ENCODE measurements at regions of chr4 and their contacts with region 1.

Region 1: DNA sequence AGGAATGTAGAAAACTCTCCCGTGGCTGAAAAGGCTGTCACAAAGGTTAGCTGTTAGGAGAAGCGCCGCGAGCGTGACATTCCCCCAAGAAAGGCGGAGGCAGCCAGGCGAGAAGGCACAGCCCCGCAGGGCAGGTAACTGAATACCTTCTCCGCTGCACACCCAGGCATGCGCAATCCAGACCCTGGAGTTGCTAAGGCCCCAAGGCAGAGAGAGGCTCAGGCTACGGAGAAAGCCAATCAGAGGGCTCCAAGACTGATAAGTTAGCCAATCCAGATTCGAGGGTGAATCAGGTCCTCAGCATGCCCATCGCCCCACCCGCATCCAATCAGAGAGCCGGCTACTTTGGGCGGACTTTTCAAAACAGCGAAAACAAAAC is 485 bp upstream of the CCNG2 start:
- DNase-seq: peak in 6 of 9 donors; percentile 99 to 100 (median 99)
- ATAC-seq: peak; percentile 96
- H3K4me3 ChIP-seq: peak overlapping the region; percentile 99
- H3K4me3 Mint-ChIP-seq: peak overlapping the region; percentile 92 to 99 (median 98)
- H3K27ac ChIP-seq: peak overlapping the region; percentile 85
- H3K27ac Mint-ChIP-seq: peak overlapping the region; percentile 88 to 99 (median 99)
- H3K4me1 ChIP-seq: peaks cover 10 to 17% of the 10 kb centered on the region in 2 donors
- H3K4me1 Mint-ChIP-seq: peaks cover 13 to 52% (median 43%) of the 10 kb centered on the region in 7 donors
- H3K27me3 ChIP-seq: no peaks in the 10 kb centered on the region
- H3K27me3 Mint-ChIP-seq: peaks cover 0 to 6% (median 0%) of the 10 kb centered on the region in 5 donors

Region 2: DNA sequence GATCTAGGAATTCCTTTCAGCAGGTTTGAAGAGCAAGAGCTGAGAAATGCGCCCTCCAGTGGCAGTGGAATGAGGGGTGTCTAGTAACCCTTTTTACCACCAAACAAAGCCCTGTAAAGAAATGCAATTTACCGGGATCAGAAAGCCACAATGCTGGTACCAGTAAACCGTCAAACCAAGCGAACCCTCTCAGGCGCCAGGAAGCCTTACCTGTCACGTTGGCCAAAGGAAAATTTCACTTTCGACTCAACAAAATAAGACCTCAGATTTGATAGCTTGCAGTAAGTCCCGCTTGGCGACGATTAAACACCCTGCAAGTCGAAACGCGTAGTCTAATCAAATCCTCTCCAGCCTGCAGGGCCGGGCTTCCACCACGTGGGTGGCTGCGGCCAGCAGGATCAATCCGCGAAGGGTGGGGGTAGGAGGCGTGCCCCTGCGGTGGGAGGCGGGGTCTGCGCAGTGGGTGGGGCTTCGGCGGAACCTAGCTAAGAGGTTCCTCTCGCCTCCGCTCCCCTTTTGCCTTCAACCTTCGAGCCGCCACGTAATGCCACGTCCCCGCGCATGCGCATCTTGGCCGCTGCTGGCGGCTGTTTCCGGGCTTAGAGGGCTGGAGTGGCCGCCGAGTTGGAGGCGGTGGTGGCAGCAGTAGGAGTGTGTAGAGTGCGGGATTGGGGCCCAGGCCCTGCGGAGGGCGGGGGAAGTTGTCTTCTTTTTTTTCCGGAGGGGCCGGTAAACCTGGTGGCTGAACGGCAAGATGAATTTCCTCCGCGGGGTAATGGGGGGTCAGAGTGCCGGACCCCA is 1432.3 kb before region 1 on chr4 and contains the start of gene USO1:
- CTCF ChIA-PET with region 1: no interaction called
- POLR2A ChIA-PET with region 1: no interaction called
- intact Hi-C with region 1: loop called (anchors 1 to 5 kb)
- DNase-seq: peak; percentile 98 to 100 (median 99)
- ATAC-seq: peak; percentile 98
- H3K4me3 ChIP-seq: peak within 1 kb of the TSS; percentile 87
- H3K4me3 Mint-ChIP-seq: peak within 1 kb of the TSS; percentile 93 to 100 (median 100)
- H3K27ac ChIP-seq: peak within 1 kb of the TSS; percentile 91
- H3K27ac Mint-ChIP-seq: peak within 1 kb of the TSS; percentile 97 to 100 (median 99)
- H3K4me1 ChIP-seq: peaks cover 25 to 30% of the 10 kb centered on the region in 2 donors
- H3K4me1 Mint-ChIP-seq: peaks cover 32 to 60% (median 59%) of the 10 kb centered on the region in 7 donors
- H3K27me3 ChIP-seq: no peaks in the 10 kb centered on the region
- H3K27me3 Mint-ChIP-seq: peaks cover 0 to 4% (median 0%) of the 10 kb centered on the region in 5 donors
- total RNA-seq, gene USO1: 17.8 to 54.8 (median 35.0) TPM

Region 3: DNA sequence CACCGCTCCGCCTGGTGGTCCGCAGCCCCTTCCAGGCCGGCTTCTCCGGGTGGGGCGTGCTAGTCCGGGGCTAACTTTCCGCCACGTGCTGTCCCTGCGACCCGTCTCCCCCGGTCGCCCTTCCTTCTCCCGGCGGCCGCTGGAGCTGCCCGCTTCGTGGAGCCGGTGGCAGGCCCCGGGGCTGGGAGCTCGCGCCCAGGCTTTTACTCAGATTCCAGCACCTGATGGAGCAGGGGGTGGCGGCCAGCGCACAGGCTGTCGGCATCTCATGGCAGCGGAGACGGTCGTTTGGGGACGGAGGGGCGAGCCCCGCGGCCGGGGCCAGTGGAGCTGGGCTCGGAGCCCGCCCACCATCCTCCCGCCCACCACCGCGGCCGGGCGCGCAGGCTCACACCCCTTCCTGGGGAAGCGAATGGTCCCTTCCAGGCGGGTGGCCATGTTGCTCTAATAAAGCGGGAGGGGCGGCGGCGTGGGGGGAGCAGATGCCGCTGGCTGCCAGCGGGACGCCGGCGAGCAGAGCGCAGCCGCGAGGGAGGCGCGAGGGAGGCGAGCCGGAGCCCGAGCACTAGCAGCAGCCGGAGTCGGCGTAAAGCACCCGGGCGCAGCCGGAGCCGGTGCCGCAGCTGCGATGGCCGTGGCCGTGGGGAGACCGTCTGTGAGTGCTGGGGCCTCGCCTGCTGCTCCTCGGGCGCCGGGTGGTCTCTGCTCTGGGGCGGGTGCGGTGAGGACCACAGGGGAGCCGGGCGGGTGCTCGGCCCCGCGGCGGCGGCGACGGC is 207.1 kb before region 1 on chr4 and contains the start of gene SEPTIN11:
- CTCF ChIA-PET with region 1: no interaction called
- POLR2A ChIA-PET with region 1: no interaction called
- intact Hi-C with region 1: loop called (anchors 2 kb)
- DNase-seq: peak; percentile 56 to 78 (median 72)
- ATAC-seq: peak; percentile 87
- H3K4me3 ChIP-seq: peak within 1 kb of the TSS; percentile 80
- H3K4me3 Mint-ChIP-seq: peak within 1 kb of the TSS; percentile 70 to 97 (median 88)
- H3K27ac ChIP-seq: peak within 1 kb of the TSS; percentile 58
- H3K27ac Mint-ChIP-seq: peak within 1 kb of the TSS in 7 of 9 donors; percentile 28 to 82 (median 71)
- H3K4me1 ChIP-seq: peaks cover 0 to 10% of the 10 kb centered on the region in 2 donors
- H3K4me1 Mint-ChIP-seq: peaks cover 8 to 23% (median 16%) of the 10 kb centered on the region in 7 donors
- H3K27me3 ChIP-seq: peaks cover 0 to 6% of the 10 kb centered on the region in 2 donors
- H3K27me3 Mint-ChIP-seq: peaks cover 0 to 71% (median 4%) of the 10 kb centered on the region in 5 donors
- total RNA-seq, gene SEPTIN11: 12.2 to 29.3 (median 20.3) TPM

Region 4: GRCh38 chr4:77095101-77095821 is 61.3 kb before region 1 on chr4:
- CTCF ChIA-PET with region 1: interaction called, 3 read pairs
- POLR2A ChIA-PET with region 1: no interaction called
- intact Hi-C with region 1: loop called (anchors 1 kb)
- DNase-seq: peak; percentile 46 to 67 (median 59)
- ATAC-seq: peak; percentile 98
- H3K4me3 ChIP-seq: no peak overlapping the region
- H3K4me3 Mint-ChIP-seq: no peak overlapping the region
- H3K27ac ChIP-seq: no peak overlapping the region
- H3K27ac Mint-ChIP-seq: no peak overlapping the region
- H3K4me1 ChIP-seq: peaks cover 0 to 2% of the 10 kb centered on the region in 2 donors
- H3K4me1 Mint-ChIP-seq: peaks cover 8 to 20% (median 16%) of the 10 kb centered on the region in 7 donors
- H3K27me3 ChIP-seq: no peaks in the 10 kb centered on the region
- H3K27me3 Mint-ChIP-seq: no peaks in the 10 kb centered on the region

Region 5: DNA sequence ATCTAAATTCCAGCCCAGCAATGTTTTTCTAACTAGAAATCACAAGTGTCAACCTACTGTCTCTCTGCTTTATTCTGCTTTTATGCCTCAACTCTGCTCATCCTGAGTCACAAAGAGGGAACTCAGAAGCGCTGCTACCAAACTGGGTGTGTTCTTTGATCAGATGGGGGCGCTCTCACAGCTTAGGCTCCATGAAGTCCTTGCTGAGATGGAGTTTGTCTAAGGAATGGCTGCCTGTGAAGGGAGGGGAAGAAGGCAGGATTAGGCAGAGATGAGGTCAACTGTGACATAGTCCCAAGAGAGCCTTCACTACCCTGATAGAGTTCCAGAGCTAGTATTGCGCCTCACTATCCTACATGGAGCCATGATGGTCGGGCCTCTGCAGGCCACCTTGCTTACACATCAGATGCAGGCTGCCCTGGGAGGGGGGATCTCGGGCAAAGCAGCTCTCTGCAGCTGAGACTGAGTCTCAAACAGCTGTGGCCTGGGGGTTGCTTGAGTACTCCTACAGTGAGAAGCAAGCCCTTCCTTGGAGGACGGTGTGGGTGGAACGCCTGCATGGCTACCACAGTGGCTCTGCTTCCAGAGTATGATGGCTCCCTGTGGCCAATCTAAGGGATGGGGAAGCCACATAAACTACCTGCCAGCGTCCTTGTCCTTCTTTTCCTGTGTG is 220.4 kb after region 1 on chr4:
- CTCF ChIA-PET with region 1: no interaction called
- POLR2A ChIA-PET with region 1: no interaction called
- intact Hi-C with region 1: no loop called
- DNase-seq: no peak
- ATAC-seq: peak; percentile 36
- H3K4me3 ChIP-seq: no peak overlapping the region
- H3K4me3 Mint-ChIP-seq: no peak overlapping the region
- H3K27ac ChIP-seq: no peak overlapping the region
- H3K27ac Mint-ChIP-seq: no peak overlapping the region
- H3K4me1 ChIP-seq: no peaks in the 10 kb centered on the region
- H3K4me1 Mint-ChIP-seq: peaks cover 0 to 15% (median 0%) of the 10 kb centered on the region in 7 donors
- H3K27me3 ChIP-seq: no peaks in the 10 kb centered on the region
- H3K27me3 Mint-ChIP-seq: peaks cover 0 to 21% (median 16%) of the 10 kb centered on the region in 5 donors

Region 6: GRCh38 chr4:77819843-77820648 is 663.5 kb after region 1 on chr4:
- CTCF ChIA-PET with region 1: no interaction called
- POLR2A ChIA-PET with region 1: interaction called, 3 read pairs
- intact Hi-C with region 1: loop called (anchors 1 to 5 kb)
- DNase-seq: peak; percentile 95 to 99 (median 98)
- ATAC-seq: peak; percentile 87
- H3K4me3 ChIP-seq: peak overlapping the region; percentile 93
- H3K4me3 Mint-ChIP-seq: peak overlapping the region; percentile 93 to 99 (median 96)
- H3K27ac ChIP-seq: peak overlapping the region; percentile 100
- H3K27ac Mint-ChIP-seq: peak overlapping the region; percentile 88 to 100 (median 99)
- H3K4me1 ChIP-seq: peaks cover 39 to 42% of the 10 kb centered on the region in 2 donors
- H3K4me1 Mint-ChIP-seq: peaks cover 37 to 69% (median 53%) of the 10 kb centered on the region in 7 donors
- H3K27me3 ChIP-seq: no peaks in the 10 kb centered on the region
- H3K27me3 Mint-ChIP-seq: peaks cover 0 to 2% (median 0%) of the 10 kb centered on the region in 5 donors